Caco-2 (cell line): ENCODE measurements at regions of chr13 and their contacts with region 1.

Region 1: DNA sequence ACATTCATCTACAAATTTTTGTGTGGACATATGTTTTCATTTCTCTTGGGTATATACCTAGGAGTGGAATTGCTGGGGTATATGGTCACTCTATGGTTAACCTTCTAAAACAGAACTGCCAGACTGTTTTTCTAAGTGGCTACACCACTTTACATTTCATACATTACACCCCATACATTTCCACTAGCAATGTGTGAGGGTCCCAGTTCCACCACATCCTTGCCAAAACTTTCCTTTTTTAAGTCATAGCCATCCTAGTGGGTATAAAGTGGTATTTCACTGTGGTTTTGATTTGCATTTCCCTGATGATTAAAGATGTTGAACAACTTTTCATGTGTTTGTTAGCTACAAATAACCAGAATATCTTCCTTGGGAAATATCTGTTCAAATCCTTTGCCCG is 336.1 kb downstream of the SHISA2 start:
- DNase-seq: no peak
- H3K4me3 ChIP-seq: no peak overlapping the region
- H3K4me3 Mint-ChIP-seq: no peak overlapping the region
- H3K27ac Mint-ChIP-seq: no peak overlapping the region
- H3K4me1 ChIP-seq: no peaks in the 10 kb centered on the region
- H3K4me1 Mint-ChIP-seq: no peaks in the 10 kb centered on the region
- H3K27me3 ChIP-seq: no peaks in the 10 kb centered on the region
- H3K27me3 Mint-ChIP-seq: peaks cover 34% of the 10 kb centered on the region
- CTCF ChIP-seq: no peak

Region 2: GRCh38 chr13:25727253-25727652 is 11.5 kb after region 1 on chr13:
- CTCF ChIA-PET with region 1: no interaction called
- POLR2A ChIA-PET with region 1: no interaction called
- intact Hi-C with region 1: loop called (anchors 1 kb)
- DNase-seq: no peak
- H3K4me3 ChIP-seq: no peak overlapping the region
- H3K4me3 Mint-ChIP-seq: no peak overlapping the region
- H3K27ac Mint-ChIP-seq: no peak overlapping the region
- H3K4me1 ChIP-seq: no peaks in the 10 kb centered on the region
- H3K4me1 Mint-ChIP-seq: no peaks in the 10 kb centered on the region
- H3K27me3 ChIP-seq: no peaks in the 10 kb centered on the region
- H3K27me3 Mint-ChIP-seq: peaks cover 20% of the 10 kb centered on the region
- CTCF ChIP-seq: no peak